RWPE1 (cell line): ENCODE measurements at regions of chr5 and their contacts with region 1.

Region 1: DNA sequence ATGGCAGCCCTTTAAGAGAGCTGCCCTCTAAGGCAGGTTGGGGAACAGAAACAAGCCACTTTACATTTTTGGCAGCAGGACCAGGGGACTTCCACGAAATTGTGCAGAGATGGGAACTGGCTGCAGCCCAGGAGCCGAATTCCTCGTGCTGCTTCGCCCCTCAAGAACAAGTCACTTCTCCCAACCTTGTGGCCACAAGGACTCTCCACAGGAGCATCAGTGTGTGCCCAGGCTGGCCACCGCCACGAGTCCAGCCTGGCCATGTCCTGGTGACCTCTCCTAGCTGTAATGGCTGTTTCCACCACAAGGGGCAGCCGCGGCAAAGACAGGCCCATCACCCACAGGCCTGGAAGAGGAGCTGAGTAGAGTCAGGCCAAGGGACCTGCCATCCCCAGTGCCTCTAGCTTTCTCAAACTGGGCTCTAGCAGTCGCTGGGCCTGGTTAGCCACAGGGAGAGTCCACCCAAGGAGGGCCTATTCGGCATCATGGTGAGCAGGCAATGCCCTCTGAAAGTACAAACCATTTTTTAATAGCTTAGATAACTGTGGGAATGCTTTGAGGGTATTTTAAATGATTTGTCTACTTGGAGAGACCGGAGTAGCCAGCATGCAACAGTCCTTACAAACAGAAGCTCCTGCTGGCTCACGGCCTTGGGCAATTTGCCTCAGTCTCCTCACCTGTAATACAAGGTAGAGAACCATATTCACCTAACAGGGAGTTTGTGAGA is 129.0 kb downstream of the COL23A1 start:
- DNase-seq: peak; percentile 79
- H3K27ac ChIP-seq: no peak overlapping the region
- CTCF ChIP-seq: peak; percentile 80

Region 2: GRCh38 chr5:178483620-178484019 is 22.5 kb after region 1 on chr5:
- CTCF ChIA-PET with region 1: interaction called, 10 read pairs
- POLR2A ChIA-PET with region 1: no interaction called
- DNase-seq: no peak
- H3K27ac ChIP-seq: no peak overlapping the region
- CTCF ChIP-seq: no peak

Region 3: GRCh38 chr5:178496642-178497041 is 35.5 kb after region 1 on chr5:
- CTCF ChIA-PET with region 1: no interaction called
- POLR2A ChIA-PET with region 1: no interaction called
- DNase-seq: no peak
- H3K27ac ChIP-seq: no peak overlapping the region
- CTCF ChIP-seq: no peak

Region 4: GRCh38 chr5:178514851-178515418 is 53.8 kb after region 1 on chr5:
- CTCF ChIA-PET with region 1: no interaction called
- POLR2A ChIA-PET with region 1: no interaction called
- DNase-seq: no peak
- H3K27ac ChIP-seq: no peak overlapping the region
- CTCF ChIP-seq: no peak